Activated naive CD4-positive, alpha-beta T cell treated with anti-CD3 and anti-CD28 coated beads for 36 hours (primary cell): ENCODE measurements at regions of chr20 and their contacts with region 1.

Region 1: GRCh38 chr20:61120595-61121515 is 131.2 kb upstream of the CDH4 start:
- DNase-seq: peak; percentile 61
- H3K4me3 Mint-ChIP-seq: no peak overlapping the region
- H3K27ac Mint-ChIP-seq: no peak overlapping the region
- H3K4me1 Mint-ChIP-seq: peaks cover 2% of the 10 kb centered on the region
- H3K27me3 Mint-ChIP-seq: no peaks in the 10 kb centered on the region

Region 2: GRCh38 chr20:59948828-59949720 is 1171.8 kb before region 1 on chr20:
- CTCF ChIA-PET with region 1: no interaction called
- intact Hi-C with region 1: loop called (anchors 2 kb)
- DNase-seq: peak; percentile 56
- H3K4me3 Mint-ChIP-seq: no peak overlapping the region
- H3K27ac Mint-ChIP-seq: peak overlapping the region; percentile 93
- H3K4me1 Mint-ChIP-seq: peaks cover 23% of the 10 kb centered on the region
- H3K27me3 Mint-ChIP-seq: no peaks in the 10 kb centered on the region

Region 3: DNA sequence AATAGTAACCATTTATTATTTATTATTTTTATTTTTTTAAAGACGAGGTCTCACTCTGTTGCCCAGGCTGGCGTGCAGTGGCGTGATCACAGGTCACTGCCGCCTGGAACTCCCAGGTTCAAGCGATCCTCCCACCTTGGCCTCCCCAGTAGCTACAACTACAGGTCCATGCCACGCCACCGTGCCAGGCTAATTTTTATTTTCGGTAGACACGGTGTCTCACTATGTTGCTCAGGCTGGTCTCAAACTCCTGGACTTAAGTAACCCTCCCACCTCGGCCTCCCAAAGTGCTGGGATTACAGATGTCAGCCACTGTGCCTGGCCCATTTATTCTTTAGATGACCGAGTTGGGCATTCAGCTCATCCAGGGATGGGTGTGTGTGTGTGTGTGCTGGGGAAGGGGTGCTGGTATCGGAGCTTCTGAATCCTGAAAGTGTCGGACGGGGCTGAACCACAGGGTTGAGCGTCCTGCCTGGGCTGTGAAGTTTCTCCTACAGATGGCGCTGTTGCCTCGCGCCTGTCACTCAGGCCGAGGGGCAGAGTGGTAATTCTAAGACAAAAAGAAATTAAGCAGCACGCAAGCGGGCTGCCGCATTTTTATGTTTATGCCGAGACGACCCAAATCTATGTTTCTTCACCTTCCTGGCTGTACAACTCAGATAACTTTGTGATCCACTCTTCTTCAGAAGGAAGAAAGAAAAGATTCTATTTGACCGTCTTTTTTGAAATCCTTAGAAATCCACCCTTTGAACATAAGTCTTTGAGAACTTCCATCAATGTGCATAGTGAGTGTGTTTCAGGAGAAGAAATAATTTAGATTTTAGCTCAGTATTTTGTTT is 909.9 kb before region 1 on chr20:
- CTCF ChIA-PET with region 1: no interaction called
- intact Hi-C with region 1: loop called (anchors 1 kb)
- DNase-seq: peak; percentile 71
- H3K4me3 Mint-ChIP-seq: no peak overlapping the region
- H3K27ac Mint-ChIP-seq: no peak overlapping the region
- H3K4me1 Mint-ChIP-seq: peaks cover 3% of the 10 kb centered on the region
- H3K27me3 Mint-ChIP-seq: peaks cover 2% of the 10 kb centered on the region

Region 4: DNA sequence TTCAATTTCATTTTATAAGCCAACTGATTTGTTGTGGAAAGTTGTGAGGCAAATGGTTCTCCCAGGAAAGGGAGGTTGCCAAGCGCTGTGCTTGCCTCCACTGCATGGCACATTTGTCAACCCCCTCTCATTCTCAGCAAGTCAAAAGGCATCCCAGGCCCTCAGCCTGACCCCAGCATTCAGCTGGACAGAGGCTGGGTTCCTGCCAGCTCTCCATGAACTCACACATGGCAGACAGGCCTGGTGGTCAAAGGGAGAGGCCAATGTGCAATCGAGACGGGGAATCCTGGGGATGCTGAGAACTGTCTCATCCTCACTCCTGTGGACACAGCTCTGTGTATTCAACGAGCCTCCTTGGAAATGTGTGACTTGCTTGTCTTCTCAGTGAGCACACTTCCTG is 25.2 kb after region 1 on chr20:
- CTCF ChIA-PET with region 1: no interaction called
- intact Hi-C with region 1: no loop called
- DNase-seq: no peak
- H3K4me3 Mint-ChIP-seq: no peak overlapping the region
- H3K27ac Mint-ChIP-seq: no peak overlapping the region
- H3K4me1 Mint-ChIP-seq: no peaks in the 10 kb centered on the region
- H3K27me3 Mint-ChIP-seq: peaks cover 4% of the 10 kb centered on the region